K562 (cell line): ENCODE measurements at regions of chr6 and their contacts with region 1.

Region 1: DNA sequence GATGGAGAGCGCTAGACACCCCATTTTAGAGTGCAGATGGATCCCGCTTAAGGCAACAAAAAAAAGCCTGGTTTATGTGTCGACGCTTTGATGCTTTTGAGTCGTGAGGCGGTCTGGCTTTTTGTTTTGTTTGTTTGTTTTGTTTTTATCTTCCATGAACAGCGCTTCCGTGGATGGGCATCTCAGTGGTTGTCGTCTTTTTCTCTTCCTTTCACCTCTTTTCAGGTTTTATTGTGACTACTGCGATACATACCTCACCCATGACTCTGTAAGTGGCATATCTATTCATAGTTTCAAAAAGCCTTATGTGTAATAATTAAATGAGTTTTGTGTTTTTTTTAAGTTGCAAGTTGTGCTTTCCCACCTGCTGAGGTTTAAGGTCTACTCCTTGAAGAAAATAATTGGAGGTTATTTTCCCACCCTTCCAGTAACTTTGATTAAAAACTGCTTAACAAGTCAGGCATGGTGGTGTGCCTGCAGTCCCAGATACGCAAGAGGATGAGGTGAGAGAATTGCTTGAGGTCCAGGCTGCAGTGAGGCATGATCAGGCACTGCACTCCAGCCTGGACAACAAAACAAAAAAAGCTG is 476 bp downstream of the SNRPC start:
- DNase-seq: no peak
- ATAC-seq: no peak; the same call in 2 of the 3 replicates
- H3K4me3 ChIP-seq: peak overlapping the region; percentile 58
- H3K27ac ChIP-seq: peak overlapping the region; percentile 96
- H3K4me1 ChIP-seq: peaks cover 3 to 22% of the 10 kb centered on the region in 2 experiments; a peak in 4 of 5 replicates
- H3K27me3 ChIP-seq: no peaks in the 10 kb centered on the region
- CTCF ChIP-seq: no peak
- EP300 ChIP-seq: no peak
- POLR2A ChIP-seq: no peak
- RAD21 ChIP-seq: no peak

Region 2: DNA sequence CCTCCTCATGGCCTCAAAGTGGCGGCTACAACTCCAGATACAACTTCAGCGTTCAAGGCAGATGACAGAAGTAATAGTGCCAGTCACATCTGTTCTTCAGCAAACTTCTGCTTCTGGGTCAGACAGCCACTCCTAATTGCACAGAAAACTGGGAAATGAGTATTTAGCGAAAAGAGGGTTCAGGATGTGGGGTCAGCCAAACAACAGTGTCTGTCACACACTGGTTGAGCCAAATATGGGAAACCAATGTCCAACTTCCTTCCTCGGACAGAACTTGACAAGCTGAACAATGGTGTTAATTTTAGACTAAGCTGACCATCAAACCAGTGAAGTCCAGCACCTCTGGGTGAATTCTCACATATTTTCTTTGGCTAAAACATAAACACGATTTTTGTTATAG is 387.4 kb before region 1 on chr6:
- CTCF ChIA-PET with region 1: no interaction called
- POLR2A ChIA-PET with region 1: no interaction called
- in situ Hi-C with region 1: no loop called
- intact Hi-C with region 1: no loop called
- DNase-seq: no peak
- ATAC-seq: no peak
- H3K4me3 ChIP-seq: no peak overlapping the region
- H3K27ac ChIP-seq: no peak overlapping the region
- H3K4me1 ChIP-seq: peaks cover 0 to 9% of the 10 kb centered on the region in 2 experiments; a peak in 3 of 5 replicates
- H3K27me3 ChIP-seq: no peaks in the 10 kb centered on the region
- CTCF ChIP-seq: no peak
- EP300 ChIP-seq: no peak
- POLR2A ChIP-seq: no peak
- RAD21 ChIP-seq: no peak

Region 3: GRCh38 chr6:34616227-34616585 is 141.6 kb before region 1 on chr6:
- CTCF ChIA-PET with region 1: no interaction called
- POLR2A ChIA-PET with region 1: interaction called, 3 read pairs
- in situ Hi-C with region 1: no loop called
- intact Hi-C with region 1: loop called (anchors 5 kb)
- DNase-seq: no peak
- ATAC-seq: peak; percentile 71
- H3K4me3 ChIP-seq: no peak overlapping the region
- H3K27ac ChIP-seq: peak overlapping the region; percentile 67
- H3K4me1 ChIP-seq: peaks cover 7 to 41% of the 10 kb centered on the region in 2 experiments; a peak in 4 of 5 replicates
- H3K27me3 ChIP-seq: no peaks in the 10 kb centered on the region
- CTCF ChIP-seq: no peak
- EP300 ChIP-seq: no peak
- POLR2A ChIP-seq: no peak
- RAD21 ChIP-seq: no peak

Region 4: DNA sequence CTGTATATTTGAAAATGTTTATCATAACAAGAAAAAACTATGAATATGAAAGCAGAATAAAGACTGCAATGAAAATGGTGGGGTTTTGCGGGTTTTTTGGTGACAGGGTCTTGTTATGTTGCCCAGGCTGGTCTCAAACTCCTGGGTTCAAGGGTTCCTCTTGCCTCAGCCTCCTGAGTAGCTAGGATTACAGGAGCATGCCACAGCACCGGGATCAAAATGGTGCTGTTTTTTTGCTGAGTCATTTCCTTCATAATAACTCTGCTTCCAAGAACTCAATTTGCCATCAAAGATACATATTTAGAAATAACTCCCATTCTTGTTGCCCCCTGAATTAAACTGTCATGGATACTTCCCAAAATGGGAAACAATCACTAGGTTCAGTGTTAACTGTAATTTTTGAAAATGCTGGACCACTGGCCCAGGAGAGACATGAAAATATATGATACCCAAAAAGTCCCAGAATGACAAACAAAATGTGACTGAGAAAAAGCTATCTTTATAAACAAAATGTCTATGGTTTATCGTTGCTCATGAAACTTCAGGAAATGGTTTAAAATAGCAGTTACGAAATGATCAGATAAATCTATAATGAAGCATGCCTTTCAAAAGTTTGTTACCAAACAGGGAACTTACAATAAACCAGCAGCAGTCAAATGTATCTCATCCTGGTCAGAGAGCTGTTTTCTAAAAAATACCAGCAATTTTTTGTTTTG is 93.4 kb before region 1 on chr6:
- CTCF ChIA-PET with region 1: no interaction called
- POLR2A ChIA-PET with region 1: interaction called, 6 read pairs
- in situ Hi-C with region 1: no loop called
- intact Hi-C with region 1: loop called (anchors 10 kb)
- DNase-seq: peak in 2 of 4 experiments; percentile 72 to 86
- ATAC-seq: peak; percentile 55
- H3K4me3 ChIP-seq: no peak overlapping the region
- H3K27ac ChIP-seq: peak overlapping the region; percentile 89
- H3K4me1 ChIP-seq: peaks cover 38 to 68% of the 10 kb centered on the region in 2 experiments
- H3K27me3 ChIP-seq: no peaks in the 10 kb centered on the region
- CTCF ChIP-seq: no peak
- EP300 ChIP-seq: peak; percentile 81
- POLR2A ChIP-seq: no peak; the same call in 1 of the 2 replicates
- RAD21 ChIP-seq: 0 out of 4 replicates have a peak, but pooled peaks of 1 of the 2 experiments have one; percentile 5

Region 5: DNA sequence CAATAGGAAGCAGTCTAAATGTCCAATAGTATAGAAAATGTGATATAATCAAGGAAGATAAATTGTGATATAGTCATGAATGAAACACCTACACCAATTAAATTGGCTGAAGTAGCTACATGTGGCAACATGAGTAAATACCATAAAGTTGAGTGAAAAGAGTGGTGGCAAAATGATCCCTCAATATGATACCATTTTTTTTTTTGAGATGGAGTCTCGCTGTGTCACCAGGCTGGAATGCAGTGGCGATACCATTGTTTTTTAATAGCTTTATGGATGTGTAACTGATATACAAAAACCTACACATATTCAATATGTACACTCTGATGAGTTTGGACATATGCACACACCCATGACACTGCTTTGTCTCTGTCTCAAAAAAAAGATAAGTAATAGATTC is 40.3 kb before region 1 on chr6:
- CTCF ChIA-PET with region 1: no interaction called
- POLR2A ChIA-PET with region 1: no interaction called
- in situ Hi-C with region 1: no loop called
- intact Hi-C with region 1: no loop called
- DNase-seq: no peak
- ATAC-seq: no peak
- H3K4me3 ChIP-seq: no peak overlapping the region
- H3K27ac ChIP-seq: no peak overlapping the region
- H3K4me1 ChIP-seq: peaks cover 11 to 16% of the 10 kb centered on the region in 2 experiments
- H3K27me3 ChIP-seq: no peaks in the 10 kb centered on the region
- CTCF ChIP-seq: no peak
- EP300 ChIP-seq: no peak
- POLR2A ChIP-seq: no peak
- RAD21 ChIP-seq: no peak

Region 6: DNA sequence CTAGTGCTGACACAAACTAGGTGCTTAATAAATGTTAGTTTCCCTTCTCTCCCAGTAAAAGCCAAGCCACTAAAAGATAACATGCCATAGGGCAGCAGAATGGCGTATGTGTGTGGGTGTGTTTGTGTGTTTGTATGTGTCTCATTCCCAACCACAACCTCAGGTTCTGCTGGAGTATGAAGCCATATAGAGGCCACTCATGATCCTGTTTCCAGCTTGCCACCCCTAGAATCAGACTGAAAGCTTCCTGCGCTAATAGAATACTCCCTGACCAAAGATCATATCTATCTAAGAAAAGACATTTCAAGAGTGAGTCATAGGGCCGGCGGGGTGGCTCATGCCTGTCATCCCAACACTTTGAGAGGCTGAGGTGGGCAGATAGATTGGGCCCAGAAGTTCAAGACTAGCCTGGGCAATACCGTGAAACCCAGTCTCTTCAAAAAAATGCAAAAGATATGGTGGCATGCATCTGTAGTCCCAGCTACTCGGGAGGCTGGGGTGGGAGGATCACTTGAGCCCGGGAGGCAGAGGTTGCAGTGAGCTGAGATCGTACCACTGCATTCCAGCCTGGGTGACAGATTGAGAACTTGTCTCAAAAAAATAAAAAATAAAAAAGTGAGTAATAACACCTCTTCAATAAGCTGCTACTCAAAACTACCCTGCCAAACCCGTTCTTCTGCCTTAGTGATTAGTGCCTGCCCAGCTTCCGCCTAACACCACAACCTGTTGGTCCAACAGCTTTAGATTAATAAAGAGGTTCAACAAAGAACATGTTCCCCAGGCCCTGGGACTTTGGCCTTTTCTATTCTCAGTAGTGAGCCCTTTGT is 12.3 kb before region 1 on chr6:
- CTCF ChIA-PET with region 1: no interaction called
- POLR2A ChIA-PET with region 1: interaction called, 30 read pairs
- in situ Hi-C with region 1: no loop called
- intact Hi-C with region 1: no loop called
- DNase-seq: peak; percentile 64 to 85 (median 72)
- ATAC-seq: peak; percentile 88
- H3K4me3 ChIP-seq: no peak overlapping the region
- H3K27ac ChIP-seq: peak overlapping the region; percentile 4; the same call in 1 of the 3 replicates
- H3K4me1 ChIP-seq: peaks cover 11 to 24% of the 10 kb centered on the region in 2 experiments
- H3K27me3 ChIP-seq: no peaks in the 10 kb centered on the region
- CTCF ChIP-seq: no peak
- EP300 ChIP-seq: peak; percentile 41; the same call in 1 of the 2 replicates
- POLR2A ChIP-seq: no peak
- RAD21 ChIP-seq: 0 out of 4 replicates have a peak, but pooled peaks of 1 of the 2 experiments have one; percentile 5

Region 7: GRCh38 chr6:34791701-34792235 is 34.0 kb after region 1 on chr6 and contains the start of gene BLTP3A:
- CTCF ChIA-PET with region 1: no interaction called
- POLR2A ChIA-PET with region 1: interaction called, 17 read pairs
- in situ Hi-C with region 1: no loop called
- intact Hi-C with region 1: loop called (anchors 2 kb)
- DNase-seq: peak; percentile 92 to 96 (median 96)
- ATAC-seq: peak; percentile 93
- H3K4me3 ChIP-seq: peak within 1 kb of the TSS; percentile 68
- H3K27ac ChIP-seq: peak within 1 kb of the TSS; percentile 95
- H3K4me1 ChIP-seq: peaks cover 7 to 14% of the 10 kb centered on the region in 2 experiments; a peak in 3 of 5 replicates
- H3K27me3 ChIP-seq: no peaks in the 10 kb centered on the region
- CTCF ChIP-seq: peak; percentile 10 to 22 (median 15); a peak in 2 of 6 replicates
- EP300 ChIP-seq: no peak
- POLR2A ChIP-seq: peak; percentile 88
- RAD21 ChIP-seq: peak in 1 of 2 experiments; percentile 29; a peak in 3 of 4 replicates
- polyA plus RNA-seq, gene BLTP3A: 7.5 to 7.7 TPM